HepG2 (cell line): ENCODE measurements at regions of chr17 and their contacts with region 1.

Region 1: DNA sequence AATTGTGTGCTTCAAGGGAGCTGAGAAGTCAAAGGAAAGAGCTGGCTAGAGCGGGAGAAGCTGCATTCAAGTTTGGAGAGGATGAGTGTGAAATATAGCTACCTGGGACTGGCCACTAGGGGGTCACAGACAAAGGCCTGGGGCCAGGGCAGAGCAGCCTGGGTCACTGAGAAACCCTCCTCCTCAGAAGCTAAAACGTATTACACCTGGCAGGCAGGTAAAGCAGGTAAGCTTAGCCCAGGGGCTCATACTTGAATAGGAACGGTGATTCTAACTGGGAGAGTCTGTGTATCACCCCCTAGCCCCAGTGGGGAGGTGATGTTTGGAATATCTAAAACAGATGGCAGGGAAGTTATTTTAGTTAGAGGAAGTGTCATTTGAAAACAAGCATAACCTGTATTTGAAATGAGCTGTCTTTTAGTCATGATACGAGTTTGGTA is 6.8 kb downstream of the KRT37 start:
- DNase-seq: peak; percentile 30
- ATAC-seq: peak; percentile 69
- H3K4me3 ChIP-seq: no peak overlapping the region
- H3K27ac ChIP-seq: no peak overlapping the region
- H3K4me1 ChIP-seq: peaks cover 62% of the 10 kb centered on the region
- H3K27me3 ChIP-seq: no peaks in the 10 kb centered on the region
- CTCF ChIP-seq: peak; percentile 58
- EP300 ChIP-seq: no peak
- POLR2A ChIP-seq: no peak
- RAD21 ChIP-seq: peak; percentile 21; the same call in 1 of the 2 replicates

Region 2: GRCh38 chr17:41403798-41404671 is 13.6 kb before region 1 on chr17:
- CTCF ChIA-PET with region 1: no interaction called
- POLR2A ChIA-PET with region 1: interaction called, 35 read pairs
- in situ Hi-C with region 1: no loop called
- intact Hi-C with region 1: no loop called
- DNase-seq: peak; percentile 95
- ATAC-seq: peak; percentile 46; the same call in 1 of the 3 replicates
- H3K4me3 ChIP-seq: no peak overlapping the region
- H3K27ac ChIP-seq: peak overlapping the region; percentile 7
- H3K4me1 ChIP-seq: peaks cover 34% of the 10 kb centered on the region
- H3K27me3 ChIP-seq: no peaks in the 10 kb centered on the region
- CTCF ChIP-seq: no peak
- EP300 ChIP-seq: peak in 1 of 2 experiments; percentile 87; a peak in 2 of 4 replicates
- POLR2A ChIP-seq: no peak
- RAD21 ChIP-seq: no peak

Region 3: DNA sequence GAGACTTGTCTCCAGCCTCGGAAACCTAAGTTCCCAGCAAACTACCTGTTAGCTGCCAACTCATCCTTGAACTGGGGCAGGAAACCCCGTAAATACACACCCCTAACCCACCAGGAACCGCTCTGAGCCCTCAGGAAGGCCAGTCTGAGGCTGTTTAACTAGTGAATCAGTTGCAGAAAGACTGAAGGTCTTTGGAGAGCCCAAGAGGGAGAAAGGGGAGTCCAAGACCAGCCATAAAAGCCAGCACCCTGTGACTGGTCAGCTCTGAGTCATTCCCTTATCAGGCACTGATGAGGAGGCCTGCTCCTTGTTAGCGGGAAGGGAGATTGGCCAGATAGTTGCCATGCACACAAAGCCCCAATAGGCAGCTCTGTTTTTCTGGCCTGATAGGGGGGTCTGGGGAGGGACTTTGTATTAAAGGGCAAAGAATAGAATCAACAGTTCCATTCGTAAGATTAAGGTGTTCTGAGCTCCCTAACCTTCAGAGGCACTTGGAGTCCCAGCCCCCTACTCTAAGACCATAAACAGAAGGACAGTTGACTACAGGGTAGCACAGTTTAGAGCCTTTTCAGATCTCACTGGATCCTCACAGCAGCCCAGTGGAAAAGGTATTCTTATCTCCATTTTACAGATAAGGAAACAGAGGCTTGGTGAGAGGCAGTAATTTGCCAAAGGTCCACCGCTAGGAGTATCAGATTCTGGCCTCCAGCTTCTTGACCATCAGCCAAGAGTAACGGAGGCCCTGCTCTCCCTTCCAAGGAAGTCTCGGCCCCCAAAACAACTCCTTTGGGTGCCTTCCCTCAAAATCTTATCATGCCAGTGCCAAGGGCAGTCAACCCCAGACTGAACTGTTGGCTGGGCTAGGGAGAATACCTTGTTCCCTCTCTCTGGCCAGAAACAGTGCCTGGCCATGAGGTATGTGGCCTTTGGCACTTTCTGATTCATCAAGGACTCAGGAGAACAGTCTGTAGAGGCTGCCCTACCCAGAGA is 112.8 kb after region 1 on chr17:
- CTCF ChIA-PET with region 1: no interaction called
- POLR2A ChIA-PET with region 1: interaction called, 3 read pairs
- in situ Hi-C with region 1: no loop called
- intact Hi-C with region 1: loop called (anchors 10 kb)
- DNase-seq: peak; percentile 85
- ATAC-seq: peak; percentile 53
- H3K4me3 ChIP-seq: peak overlapping the region in 1 of 3 experiments; percentile 84; a peak in 1 of 6 replicates
- H3K27ac ChIP-seq: peak overlapping the region; percentile 7
- H3K4me1 ChIP-seq: peaks cover 56% of the 10 kb centered on the region
- H3K27me3 ChIP-seq: peaks cover 0 to 3% of the 10 kb centered on the region in 2 experiments; a peak in 1 of 5 replicates
- CTCF ChIP-seq: no peak
- EP300 ChIP-seq: peak in 1 of 2 experiments; percentile 35; a peak in 1 of 4 replicates
- POLR2A ChIP-seq: peak in 1 of 2 experiments; percentile 36; a peak in 1 of 4 replicates
- RAD21 ChIP-seq: no peak